SK-N-SH (cell line): ENCODE measurements at regions of chr12 and their contacts with region 1.

Region 1: DNA sequence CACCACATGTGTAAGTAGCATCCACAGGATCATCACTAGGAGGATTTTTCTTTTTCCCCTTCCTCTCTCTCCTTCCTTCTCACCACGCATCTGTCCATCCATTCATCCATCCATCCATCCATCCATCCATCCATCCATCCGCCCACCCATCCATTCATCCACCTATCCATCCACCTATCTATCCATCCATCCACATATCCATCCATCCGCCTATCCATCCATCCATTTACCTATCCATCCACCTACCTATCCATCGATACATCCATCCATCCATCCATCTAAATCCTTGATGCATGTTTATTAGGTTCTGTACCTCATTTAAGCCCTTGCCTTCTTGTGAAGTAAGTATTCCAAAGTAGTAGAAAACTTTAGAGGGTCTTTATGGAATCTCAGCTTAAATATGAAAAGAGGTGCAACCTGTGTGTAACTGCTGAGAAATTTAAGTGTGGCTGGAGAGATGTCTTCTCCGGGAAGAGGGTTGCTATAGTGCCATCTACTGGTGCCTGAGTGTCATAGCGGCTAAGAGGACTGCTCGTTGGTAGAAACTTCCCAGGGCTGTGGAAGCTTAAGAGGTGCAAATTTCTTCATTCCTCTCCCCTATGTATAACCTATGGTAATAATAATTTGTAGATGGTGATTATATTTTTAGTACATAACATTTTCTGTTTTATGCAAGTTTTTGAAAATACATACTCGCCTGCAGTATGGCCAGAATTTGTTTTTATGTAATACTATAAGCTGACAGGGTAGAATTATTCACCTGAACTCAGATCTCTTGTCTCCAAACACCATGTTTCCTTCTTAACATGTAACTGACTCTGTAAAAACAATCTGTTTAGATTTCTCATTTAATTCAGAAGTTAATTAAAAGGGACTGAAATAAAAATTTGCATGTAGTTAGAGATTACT is 46.0 kb downstream of the MYO1H start:
- DNase-seq: peak; percentile 74
- H3K4me3 ChIP-seq: no peak overlapping the region; a peak in 1 of 4 replicates
- H3K27ac ChIP-seq: no peak overlapping the region
- H3K4me1 ChIP-seq: no peaks in the 10 kb centered on the region
- H3K27me3 ChIP-seq: no peaks in the 10 kb centered on the region
- CTCF ChIP-seq: peak; percentile 94
- EP300 ChIP-seq: no peak
- RAD21 ChIP-seq: peak; percentile 68

Region 2: GRCh38 chr12:109110988-109111495 is 282.6 kb before region 1 on chr12:
- CTCF ChIA-PET with region 1: interaction called, 86 read pairs
- POLR2A ChIA-PET with region 1: no interaction called
- DNase-seq: peak; percentile 91
- H3K4me3 ChIP-seq: peak overlapping the region; percentile 58 to 80
- H3K27ac ChIP-seq: peak overlapping the region; percentile 95 to 97
- H3K4me1 ChIP-seq: peaks cover 9 to 18% of the 10 kb centered on the region in 2 experiments
- H3K27me3 ChIP-seq: no peaks in the 10 kb centered on the region
- CTCF ChIP-seq: no peak
- EP300 ChIP-seq: peak; percentile 12 to 19; a peak in 1 of 4 replicates
- RAD21 ChIP-seq: no peak

Region 3: GRCh38 chr12:109255377-109255776 is 138.3 kb before region 1 on chr12:
- CTCF ChIA-PET with region 1: interaction called, 10 read pairs
- POLR2A ChIA-PET with region 1: no interaction called
- DNase-seq: no peak
- H3K4me3 ChIP-seq: no peak overlapping the region
- H3K27ac ChIP-seq: no peak overlapping the region
- H3K4me1 ChIP-seq: no peaks in the 10 kb centered on the region
- H3K27me3 ChIP-seq: no peaks in the 10 kb centered on the region
- CTCF ChIP-seq: no peak
- EP300 ChIP-seq: no peak
- RAD21 ChIP-seq: peak; percentile 20; the same call in 1 of the 2 replicates

Region 4: GRCh38 chr12:109264095-109264942 is 129.4 kb before region 1 on chr12:
- CTCF ChIA-PET with region 1: interaction called, 124 read pairs
- POLR2A ChIA-PET with region 1: no interaction called
- DNase-seq: peak; percentile 90
- H3K4me3 ChIP-seq: peak overlapping the region in 1 of 2 experiments; percentile 39; a peak in 1 of 4 replicates
- H3K27ac ChIP-seq: no peak overlapping the region
- H3K4me1 ChIP-seq: peaks cover 0 to 8% of the 10 kb centered on the region in 2 experiments; a peak in 1 of 4 replicates
- H3K27me3 ChIP-seq: no peaks in the 10 kb centered on the region
- CTCF ChIP-seq: peak; percentile 64
- EP300 ChIP-seq: no peak
- RAD21 ChIP-seq: peak; percentile 76

Region 5: GRCh38 chr12:109302358-109302757 is 91.3 kb before region 1 on chr12:
- CTCF ChIA-PET with region 1: interaction called, 11 read pairs
- POLR2A ChIA-PET with region 1: no interaction called
- DNase-seq: no peak
- H3K4me3 ChIP-seq: no peak overlapping the region
- H3K27ac ChIP-seq: no peak overlapping the region
- H3K4me1 ChIP-seq: peaks cover 0 to 3% of the 10 kb centered on the region in 2 experiments; a peak in 1 of 4 replicates
- H3K27me3 ChIP-seq: no peaks in the 10 kb centered on the region; the same call in 1 of the 2 replicates
- CTCF ChIP-seq: no peak; the same call in 1 of the 2 replicates
- EP300 ChIP-seq: no peak
- RAD21 ChIP-seq: no peak

Region 6: GRCh38 chr12:109377139-109377685 is 16.5 kb before region 1 on chr12:
- CTCF ChIA-PET with region 1: interaction called, 43 read pairs
- POLR2A ChIA-PET with region 1: no interaction called
- DNase-seq: no peak
- H3K4me3 ChIP-seq: no peak overlapping the region
- H3K27ac ChIP-seq: no peak overlapping the region
- H3K4me1 ChIP-seq: no peaks in the 10 kb centered on the region
- H3K27me3 ChIP-seq: no peaks in the 10 kb centered on the region
- CTCF ChIP-seq: no peak
- EP300 ChIP-seq: no peak
- RAD21 ChIP-seq: no peak